Activated CD8-positive, alpha-beta memory T cell treated with anti-CD3 and anti-CD28 coated beads, Interleukin-2, amount 10 ng/mL, durations not matched to agents 7 days and 5 days (primary cell): ENCODE measurements at regions of chr2 and their contacts with region 1.

Region 1: DNA sequence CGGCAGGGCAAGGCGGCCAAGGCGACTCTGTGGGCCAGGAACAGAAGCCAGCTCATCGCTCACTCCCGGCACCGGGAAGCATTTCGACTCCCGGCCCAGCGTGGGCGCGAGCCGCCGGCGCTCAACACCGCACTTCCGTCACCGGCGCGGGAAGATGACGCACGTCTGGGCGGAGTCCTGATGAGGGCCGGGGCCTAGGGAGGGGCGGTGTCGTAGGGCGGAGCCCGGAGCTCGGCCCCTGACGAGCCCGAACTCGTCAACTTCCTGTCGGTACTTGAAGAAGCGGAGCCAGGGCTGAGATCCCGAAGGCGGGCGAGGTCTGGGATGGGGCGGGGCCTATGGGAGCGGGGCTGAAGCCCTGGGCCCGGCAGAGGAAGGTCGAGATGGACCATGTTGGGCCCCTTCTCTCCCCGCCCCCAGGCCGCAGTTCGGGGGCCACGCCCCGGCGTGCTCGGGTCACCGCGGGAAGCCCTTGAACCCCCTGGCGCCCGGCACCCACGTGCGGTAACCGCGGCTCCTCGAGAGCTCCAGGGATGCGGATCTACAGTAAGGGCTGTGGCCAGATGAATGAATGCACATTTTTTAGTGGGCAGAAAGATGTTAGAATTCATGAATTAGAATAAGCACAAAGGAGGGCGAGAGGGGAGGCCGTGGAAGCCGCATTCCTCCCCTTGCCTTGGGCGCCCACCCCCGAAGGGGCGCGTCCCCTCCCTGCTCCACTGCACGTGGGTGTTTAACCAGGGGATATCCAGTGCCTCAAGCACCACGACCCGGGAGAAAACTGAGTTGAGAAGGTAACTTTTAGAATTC is at the start of gene RNASEH1:
- DNase-seq: peak; percentile 98
- ATAC-seq: peak; percentile 99
- H3K4me3 Mint-ChIP-seq: peak within 1 kb of the TSS; percentile 91
- H3K27ac Mint-ChIP-seq: peak within 1 kb of the TSS; percentile 96
- H3K4me1 Mint-ChIP-seq: peaks cover 56% of the 10 kb centered on the region
- H3K27me3 Mint-ChIP-seq: no peaks in the 10 kb centered on the region
- total RNA-seq, gene RNASEH1: 26.3 to 32.9 TPM

Region 2: DNA sequence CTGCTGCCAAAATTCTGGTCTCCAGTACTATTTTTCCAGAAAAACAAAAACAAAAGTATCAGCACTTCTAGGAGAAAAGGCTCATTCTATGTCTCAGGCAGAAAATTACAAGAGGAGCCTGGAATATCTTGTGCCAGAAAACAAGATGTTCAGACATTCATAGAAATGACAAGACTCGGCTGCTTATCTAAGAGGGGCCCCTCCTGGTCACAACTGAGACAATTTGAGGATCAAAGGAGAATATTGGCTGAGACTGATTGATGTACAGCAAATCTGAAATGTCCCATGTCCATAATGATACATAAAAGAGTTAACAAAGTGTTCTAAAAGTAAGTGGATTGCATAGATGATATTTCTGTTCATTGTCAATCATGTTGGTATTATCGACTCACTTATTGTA is 14.2 kb after region 1 on chr2:
- CTCF ChIA-PET with region 1: interaction called, 13 read pairs
- DNase-seq: no peak
- ATAC-seq: no peak
- H3K4me3 Mint-ChIP-seq: no peak overlapping the region
- H3K27ac Mint-ChIP-seq: no peak overlapping the region
- H3K4me1 Mint-ChIP-seq: peaks cover 22% of the 10 kb centered on the region
- H3K27me3 Mint-ChIP-seq: no peaks in the 10 kb centered on the region